PC-3 (cell line): ENCODE measurements at regions of chr10 and their contacts with region 1.

Region 1: GRCh38 chr10:125160856-125161706 is 718 bp upstream of the CTBP2 start:
- DNase-seq: peak; percentile 78
- ATAC-seq: peak; percentile 69
- H3K4me3 ChIP-seq: peak overlapping the region; percentile 83
- H3K27ac ChIP-seq: peak overlapping the region; percentile 89
- H3K4me1 ChIP-seq: peaks cover 25% of the 10 kb centered on the region
- H3K27me3 ChIP-seq: no peaks in the 10 kb centered on the region
- CTCF ChIP-seq: peak; percentile 38

Region 2: GRCh38 chr10:124957409-124957947 is 203.6 kb before region 1 on chr10:
- CTCF ChIA-PET with region 1: no interaction called
- POLR2A ChIA-PET with region 1: no interaction called
- intact Hi-C with region 1: no loop called
- DNase-seq: no peak
- ATAC-seq: no peak
- H3K4me3 ChIP-seq: no peak overlapping the region
- H3K27ac ChIP-seq: no peak overlapping the region
- H3K4me1 ChIP-seq: no peaks in the 10 kb centered on the region
- H3K27me3 ChIP-seq: no peaks in the 10 kb centered on the region
- CTCF ChIP-seq: no peak

Region 3: GRCh38 chr10:125048101-125048864 is 112.8 kb before region 1 on chr10:
- CTCF ChIA-PET with region 1: no interaction called
- POLR2A ChIA-PET with region 1: no interaction called
- intact Hi-C with region 1: loop called (anchors 5 kb)
- DNase-seq: peak; percentile 81
- ATAC-seq: peak; percentile 85
- H3K4me3 ChIP-seq: no peak overlapping the region
- H3K27ac ChIP-seq: peak overlapping the region; percentile 28; the same call in 1 of the 2 replicates
- H3K4me1 ChIP-seq: peaks cover 21% of the 10 kb centered on the region
- H3K27me3 ChIP-seq: no peaks in the 10 kb centered on the region
- CTCF ChIP-seq: peak; percentile 85

Region 4: GRCh38 chr10:125060826-125061556 is 100.1 kb before region 1 on chr10:
- CTCF ChIA-PET with region 1: no interaction called
- POLR2A ChIA-PET with region 1: no interaction called
- intact Hi-C with region 1: loop called (anchors 5 kb)
- DNase-seq: peak; percentile 74
- ATAC-seq: peak; percentile 65
- H3K4me3 ChIP-seq: no peak overlapping the region
- H3K27ac ChIP-seq: peak overlapping the region; percentile 42
- H3K4me1 ChIP-seq: peaks cover 44% of the 10 kb centered on the region
- H3K27me3 ChIP-seq: no peaks in the 10 kb centered on the region
- CTCF ChIP-seq: peak; percentile 85

Region 5: GRCh38 chr10:125123476-125124114 is 37.5 kb before region 1 on chr10:
- CTCF ChIA-PET with region 1: no interaction called
- POLR2A ChIA-PET with region 1: no interaction called
- intact Hi-C with region 1: loop called (anchors 5 kb)
- DNase-seq: peak; percentile 93
- ATAC-seq: peak; percentile 96
- H3K4me3 ChIP-seq: peak overlapping the region; percentile 38; the same call in 1 of the 2 replicates
- H3K27ac ChIP-seq: peak overlapping the region; percentile 96
- H3K4me1 ChIP-seq: peaks cover 38% of the 10 kb centered on the region
- H3K27me3 ChIP-seq: no peaks in the 10 kb centered on the region
- CTCF ChIP-seq: no peak

Region 6: GRCh38 chr10:125231116-125231812 is 70.2 kb after region 1 on chr10:
- CTCF ChIA-PET with region 1: no interaction called
- POLR2A ChIA-PET with region 1: no interaction called
- intact Hi-C with region 1: loop called (anchors 5 kb)
- DNase-seq: peak; percentile 91
- ATAC-seq: peak; percentile 98
- H3K4me3 ChIP-seq: no peak overlapping the region
- H3K27ac ChIP-seq: peak overlapping the region; percentile 80
- H3K4me1 ChIP-seq: peaks cover 26% of the 10 kb centered on the region
- H3K27me3 ChIP-seq: no peaks in the 10 kb centered on the region
- CTCF ChIP-seq: no peak

Region 7: GRCh38 chr10:125343118-125343925 is 182.2 kb after region 1 on chr10:
- CTCF ChIA-PET with region 1: no interaction called
- POLR2A ChIA-PET with region 1: no interaction called
- intact Hi-C with region 1: loop called (anchors 1 kb)
- DNase-seq: peak; percentile 55
- ATAC-seq: no peak
- H3K4me3 ChIP-seq: no peak overlapping the region
- H3K27ac ChIP-seq: no peak overlapping the region
- H3K4me1 ChIP-seq: peaks cover 5% of the 10 kb centered on the region; the same call in 1 of the 2 replicates
- H3K27me3 ChIP-seq: no peaks in the 10 kb centered on the region
- CTCF ChIP-seq: peak; percentile 64

Region 8: GRCh38 chr10:125694874-125695273 is 533.8 kb after region 1 on chr10:
- CTCF ChIA-PET with region 1: no interaction called
- POLR2A ChIA-PET with region 1: no interaction called
- intact Hi-C with region 1: loop called (anchors 10 kb)
- DNase-seq: peak; percentile 88
- ATAC-seq: peak; percentile 73
- H3K4me3 ChIP-seq: 0 out of 2 replicates have a peak overlapping the region, but pooled peaks have one; percentile 16
- H3K27ac ChIP-seq: peak overlapping the region; percentile 42
- H3K4me1 ChIP-seq: peaks cover 41% of the 10 kb centered on the region
- H3K27me3 ChIP-seq: no peaks in the 10 kb centered on the region
- CTCF ChIP-seq: no peak